ENCODE measurements at regions of chr1 and their contacts with region 1.

Region 1: GRCh38 chr1:195306281-195306680 is 1302.0 kb downstream of the KCNT2 start:
- DNase-seq: no peak
- H3K4me3 ChIP-seq: no peak overlapping the region
- H3K27ac ChIP-seq: no peak overlapping the region
- H3K4me1 ChIP-seq: no peaks in the 10 kb centered on the region
- H3K27me3 ChIP-seq: no peaks in the 10 kb centered on the region

Region 2: GRCh38 chr1:195580993-195581392 is 274.7 kb after region 1 on chr1:
- CTCF ChIA-PET with region 1: no interaction called
- POLR2A ChIA-PET with region 1: interaction called, 10 read pairs
- DNase-seq: peak in 1 of 3 donors; percentile 0
- H3K4me3 ChIP-seq: no peak overlapping the region
- H3K27ac ChIP-seq: no peak overlapping the region
- H3K4me1 ChIP-seq: no peaks in the 10 kb centered on the region
- H3K27me3 ChIP-seq: no peaks in the 10 kb centered on the region

Measured in common myeloid progenitor, CD34-positive (primary cell).